Tibial artery (tissue), 4 donors: ENCODE measurements at regions of chr20 and their contacts with region 1.

Region 1: DNA sequence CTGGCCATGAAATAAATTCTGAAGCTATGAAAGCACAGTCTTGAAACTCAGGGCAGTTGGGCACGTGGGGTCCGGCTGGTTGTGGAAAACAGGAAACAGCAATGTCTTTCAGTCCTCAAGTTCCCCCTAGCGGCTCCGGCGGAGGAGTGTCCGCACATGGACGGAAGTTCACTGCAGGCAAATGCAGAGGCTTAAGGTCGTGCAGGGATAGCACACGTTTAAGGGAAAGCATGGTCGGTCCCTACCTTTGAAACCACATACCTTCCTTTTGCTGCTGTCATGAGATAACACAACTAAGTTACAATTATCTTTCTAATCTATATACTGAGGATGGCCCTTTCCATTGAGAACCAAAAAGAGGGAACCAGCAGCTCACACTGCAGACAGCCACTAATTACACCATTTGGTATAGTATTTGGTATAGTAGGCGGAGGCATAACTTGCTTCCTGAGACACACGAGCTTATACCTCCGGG is 52.6 kb upstream of the NFATC2 start:
- DNase-seq: peak; percentile 94 to 95
- H3K4me3 ChIP-seq: no peak overlapping the region
- H3K27ac ChIP-seq: peak overlapping the region; percentile 42 to 52
- H3K4me1 ChIP-seq: peaks cover 0 to 15% (median 5%) of the 10 kb centered on the region in 4 donors
- H3K27me3 ChIP-seq: no peaks in the 10 kb centered on the region
- CTCF ChIP-seq: peak; percentile 89 to 95

Region 2: DNA sequence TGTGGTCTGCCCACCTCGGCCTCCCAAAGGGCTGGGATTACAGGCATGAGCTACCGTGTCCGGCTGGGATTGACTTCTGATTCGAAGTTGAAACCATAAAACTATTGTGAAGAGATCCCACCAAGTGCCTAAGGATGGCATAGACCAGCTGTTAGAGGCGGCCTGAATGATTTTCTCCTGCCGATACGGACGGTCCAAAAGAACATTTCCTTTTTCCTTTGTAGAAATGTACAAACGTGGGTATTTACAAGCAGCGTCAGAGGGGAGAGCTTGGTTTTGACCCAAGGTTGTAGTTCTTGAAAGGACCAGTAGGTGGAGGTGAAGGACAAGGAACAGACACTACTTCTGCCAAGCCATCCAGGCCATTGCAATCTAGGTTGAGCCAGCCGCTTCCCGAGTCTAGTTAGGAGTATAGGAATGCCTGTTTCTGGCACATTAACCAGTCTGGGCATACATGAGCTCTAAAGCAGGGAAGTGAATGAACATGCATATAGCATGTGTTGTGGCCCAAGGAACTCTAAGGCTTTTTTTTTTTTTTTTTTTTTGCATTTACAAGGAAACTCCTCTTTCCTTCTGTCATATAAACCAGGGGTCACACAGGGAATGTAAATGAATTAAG is 607.4 kb before region 1 on chr20:
- intact Hi-C with region 1: loop called (anchors 10 kb)
- DNase-seq: peak in 1 of 2 donors; percentile 70
- H3K4me3 ChIP-seq: no peak overlapping the region
- H3K27ac ChIP-seq: no peak overlapping the region
- H3K4me1 ChIP-seq: no peaks in the 10 kb centered on the region
- H3K27me3 ChIP-seq: peaks cover 0 to 42% of the 10 kb centered on the region in 2 donors
- CTCF ChIP-seq: peak; percentile 87 to 94

Region 3: GRCh38 chr20:51372176-51372803 is 222.8 kb before region 1 on chr20:
- intact Hi-C with region 1: loop called (anchors 5 kb)
- DNase-seq: peak in 1 of 2 donors; percentile 57
- H3K4me3 ChIP-seq: no peak overlapping the region
- H3K27ac ChIP-seq: no peak overlapping the region
- H3K4me1 ChIP-seq: peaks cover 0 to 8% (median 0%) of the 10 kb centered on the region in 4 donors
- H3K27me3 ChIP-seq: no peaks in the 10 kb centered on the region
- CTCF ChIP-seq: peak; percentile 75

Region 4: GRCh38 chr20:51382986-51383821 is 211.9 kb before region 1 on chr20:
- intact Hi-C with region 1: loop called (anchors 5 kb)
- DNase-seq: no peak
- H3K4me3 ChIP-seq: no peak overlapping the region
- H3K27ac ChIP-seq: no peak overlapping the region
- H3K4me1 ChIP-seq: no peaks in the 10 kb centered on the region
- H3K27me3 ChIP-seq: no peaks in the 10 kb centered on the region
- CTCF ChIP-seq: no peak

Region 5: DNA sequence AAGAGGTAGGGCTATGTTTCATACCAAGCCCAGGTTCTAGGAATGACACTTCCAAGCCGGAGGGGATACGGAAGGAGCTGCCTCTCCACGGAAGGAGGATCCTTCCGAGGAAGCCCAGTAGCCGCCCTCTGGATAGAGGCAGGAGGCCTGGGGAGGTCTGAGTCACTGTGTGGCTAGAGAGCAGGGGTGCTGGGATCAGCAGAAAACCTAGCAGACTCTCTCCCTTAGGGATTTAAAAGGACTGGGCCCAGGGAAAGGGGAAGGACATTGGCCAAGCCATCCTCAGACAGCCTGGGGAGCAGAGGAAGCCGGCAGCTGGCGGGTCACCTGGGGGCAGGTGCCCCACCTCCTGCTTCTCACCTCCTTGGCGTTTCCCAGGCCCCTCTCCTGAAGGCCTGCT is 16.0 kb before region 1 on chr20:
- intact Hi-C with region 1: no loop called
- DNase-seq: no peak
- H3K4me3 ChIP-seq: no peak overlapping the region
- H3K27ac ChIP-seq: no peak overlapping the region
- H3K4me1 ChIP-seq: no peaks in the 10 kb centered on the region
- H3K27me3 ChIP-seq: no peaks in the 10 kb centered on the region
- CTCF ChIP-seq: no peak

Region 6: GRCh38 chr20:51910321-51911053 is 315.4 kb after region 1 on chr20:
- intact Hi-C with region 1: no loop called
- DNase-seq: no peak
- H3K4me3 ChIP-seq: no peak overlapping the region
- H3K27ac ChIP-seq: no peak overlapping the region
- H3K4me1 ChIP-seq: no peaks in the 10 kb centered on the region
- H3K27me3 ChIP-seq: peaks cover 0 to 4% of the 10 kb centered on the region in 2 donors
- CTCF ChIP-seq: no peak